Activated T-helper 1 cell treated with anti-CD3 and anti-CD28 coated beads, Interleukin-12 subunit alpha, Interleukin-12 subunit beta, Interleukin-2, Interleukin-4 antibody, amounts not matched to agents 30 ng/mL and 10 ng/mL and 1 ng/mL, durations not matched to agents 14 hours and 24 hours and 36 hours (primary cell): ENCODE measurements at regions of chr10 and their contacts with region 1.

Region 1: GRCh38 chr10:127990846-127991542 is 84.1 kb downstream of the PTPRE start:
- DNase-seq: peak; percentile 35
- H3K4me3 Mint-ChIP-seq: peak overlapping the region; percentile 65
- H3K27ac Mint-ChIP-seq: peak overlapping the region; percentile 96
- H3K4me1 Mint-ChIP-seq: peaks cover 61% of the 10 kb centered on the region
- H3K27me3 Mint-ChIP-seq: no peaks in the 10 kb centered on the region

Region 2: DNA sequence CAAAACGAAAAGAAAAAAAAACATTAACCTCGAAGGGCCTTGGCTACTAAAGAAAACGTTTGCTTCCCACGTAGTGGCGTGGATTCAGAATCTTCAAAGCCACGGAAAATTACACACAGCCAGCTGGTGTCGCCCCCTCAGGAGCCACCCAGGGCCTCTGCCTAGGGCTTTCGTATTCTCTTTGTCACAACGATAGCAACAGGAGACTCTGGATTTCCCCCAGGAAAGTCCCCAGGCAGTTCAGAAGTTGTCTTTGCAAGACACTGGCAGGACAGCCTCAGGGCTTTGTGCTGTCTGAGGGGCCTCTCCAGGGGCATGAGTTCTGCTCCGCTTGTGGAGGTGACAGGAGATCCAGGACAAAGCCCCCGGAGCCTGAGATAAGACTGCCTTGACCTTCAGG is 644.4 kb before region 1 on chr10:
- intact Hi-C with region 1: loop called (anchors 5 kb)
- DNase-seq: peak; percentile 1
- H3K4me3 Mint-ChIP-seq: no peak overlapping the region
- H3K27ac Mint-ChIP-seq: no peak overlapping the region
- H3K4me1 Mint-ChIP-seq: peaks cover 7% of the 10 kb centered on the region
- H3K27me3 Mint-ChIP-seq: peaks cover 4% of the 10 kb centered on the region

Region 3: GRCh38 chr10:127977357-127978009 is 13.5 kb before region 1 on chr10:
- intact Hi-C with region 1: loop called (anchors 1 kb)
- DNase-seq: peak; percentile 22
- H3K4me3 Mint-ChIP-seq: no peak overlapping the region
- H3K27ac Mint-ChIP-seq: no peak overlapping the region
- H3K4me1 Mint-ChIP-seq: peaks cover 9% of the 10 kb centered on the region
- H3K27me3 Mint-ChIP-seq: peaks cover 7% of the 10 kb centered on the region

Region 4: GRCh38 chr10:128035557-128035973 is 44.6 kb after region 1 on chr10:
- intact Hi-C with region 1: no loop called
- DNase-seq: peak; percentile 42
- H3K4me3 Mint-ChIP-seq: no peak overlapping the region
- H3K27ac Mint-ChIP-seq: no peak overlapping the region
- H3K4me1 Mint-ChIP-seq: no peaks in the 10 kb centered on the region
- H3K27me3 Mint-ChIP-seq: no peaks in the 10 kb centered on the region

Region 5: GRCh38 chr10:128047351-128047750 is 56.4 kb after region 1 on chr10:
- intact Hi-C with region 1: loop called (anchors 1 kb)
- DNase-seq: peak; percentile 83
- H3K4me3 Mint-ChIP-seq: peak overlapping the region; percentile 94
- H3K27ac Mint-ChIP-seq: peak overlapping the region; percentile 96
- H3K4me1 Mint-ChIP-seq: peaks cover 49% of the 10 kb centered on the region
- H3K27me3 Mint-ChIP-seq: peaks cover 2% of the 10 kb centered on the region

Region 6: GRCh38 chr10:128125944-128126764 is 135.2 kb after region 1 on chr10 and contains the start of gene MKI67:
- intact Hi-C with region 1: loop called (anchors 1 kb)
- DNase-seq: peak; percentile 88
- H3K4me3 Mint-ChIP-seq: peak within 1 kb of the TSS; percentile 98
- H3K27ac Mint-ChIP-seq: peak within 1 kb of the TSS; percentile 95
- H3K4me1 Mint-ChIP-seq: peaks cover 54% of the 10 kb centered on the region
- H3K27me3 Mint-ChIP-seq: peaks cover 2% of the 10 kb centered on the region
- total RNA-seq, gene MKI67: 141 and 159 TPM in 2 replicates

Region 7: DNA sequence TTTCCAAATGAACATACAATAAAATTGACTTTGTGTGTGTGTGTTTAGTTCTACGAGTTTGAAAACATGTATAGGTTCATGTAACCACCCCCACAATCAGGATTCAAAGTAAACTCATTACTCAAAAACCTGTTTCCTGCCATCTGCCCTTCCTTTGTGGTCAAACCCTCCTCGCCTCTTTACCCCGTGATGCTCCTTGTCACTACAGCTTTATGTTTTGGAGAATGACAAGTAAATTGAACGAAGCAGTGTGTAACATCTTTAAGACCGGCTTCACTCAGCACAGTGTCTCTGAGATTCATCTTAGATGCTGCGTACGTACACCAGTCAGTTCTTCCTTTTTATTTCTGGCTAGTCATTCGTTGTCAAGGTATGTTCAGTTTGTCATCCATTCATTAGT is 189.8 kb after region 1 on chr10:
- intact Hi-C with region 1: loop called (anchors 2 kb)
- DNase-seq: peak; percentile 68
- H3K4me3 Mint-ChIP-seq: peak overlapping the region; percentile 68
- H3K27ac Mint-ChIP-seq: peak overlapping the region; percentile 82
- H3K4me1 Mint-ChIP-seq: peaks cover 62% of the 10 kb centered on the region
- H3K27me3 Mint-ChIP-seq: no peaks in the 10 kb centered on the region